Heart right ventricle (tissue), 16 donors: ENCODE measurements at regions of chr9 and their contacts with region 1.

Region 1: DNA sequence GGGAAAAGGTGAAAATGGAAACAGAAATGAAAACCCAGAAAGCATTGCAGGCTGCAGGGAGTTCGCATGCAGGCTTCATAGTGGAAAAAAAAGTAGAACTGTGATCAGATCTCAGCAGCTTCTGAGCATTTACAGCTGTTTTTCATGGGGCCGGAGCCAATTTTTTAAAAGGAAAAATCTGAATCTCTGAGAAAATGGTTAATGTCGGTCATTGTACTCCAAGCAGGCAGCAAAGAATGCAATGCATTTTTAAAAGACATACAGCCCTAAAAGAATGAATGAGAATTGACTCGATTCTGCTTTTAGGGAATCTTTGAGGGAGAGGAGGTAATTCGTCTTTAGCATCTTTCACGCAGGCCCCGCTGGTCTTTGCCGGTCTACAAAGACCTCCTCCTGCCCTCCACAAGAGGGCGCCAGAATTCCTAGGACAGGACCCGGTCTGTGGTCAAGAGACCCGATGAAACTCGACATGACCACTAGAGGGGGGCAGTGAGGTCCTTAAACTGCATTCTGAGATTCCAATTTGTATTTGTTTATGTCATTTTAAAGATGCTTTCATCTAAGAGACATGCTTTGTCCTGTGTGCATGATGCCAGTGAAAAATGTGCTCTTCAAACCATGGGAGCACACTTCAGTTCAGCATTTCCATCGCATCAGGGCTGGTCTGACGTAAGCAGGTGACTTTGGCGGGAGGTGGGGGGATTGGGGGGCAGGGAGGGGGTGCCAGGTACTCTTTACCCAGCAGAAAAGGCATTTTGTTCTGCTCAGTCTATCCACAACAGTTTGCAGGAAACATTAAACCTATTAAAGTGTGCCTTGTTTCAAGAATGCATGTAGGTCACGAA is 43.7 kb upstream of the TMEM252 start:
- DNase-seq: peak; percentile 68 to 89
- ATAC-seq: peak; percentile 94 to 98 (median 97)
- H3K4me3 ChIP-seq: peak overlapping the region in 1 of 10 donors; percentile 10
- H3K27ac ChIP-seq: peak overlapping the region in 1 of 10 donors; percentile 39
- H3K4me1 ChIP-seq: no peaks in the 10 kb centered on the region
- H3K27me3 ChIP-seq: no peaks in the 10 kb centered on the region
- CTCF ChIP-seq: peak; percentile 95 to 100 (median 99)

Region 2: DNA sequence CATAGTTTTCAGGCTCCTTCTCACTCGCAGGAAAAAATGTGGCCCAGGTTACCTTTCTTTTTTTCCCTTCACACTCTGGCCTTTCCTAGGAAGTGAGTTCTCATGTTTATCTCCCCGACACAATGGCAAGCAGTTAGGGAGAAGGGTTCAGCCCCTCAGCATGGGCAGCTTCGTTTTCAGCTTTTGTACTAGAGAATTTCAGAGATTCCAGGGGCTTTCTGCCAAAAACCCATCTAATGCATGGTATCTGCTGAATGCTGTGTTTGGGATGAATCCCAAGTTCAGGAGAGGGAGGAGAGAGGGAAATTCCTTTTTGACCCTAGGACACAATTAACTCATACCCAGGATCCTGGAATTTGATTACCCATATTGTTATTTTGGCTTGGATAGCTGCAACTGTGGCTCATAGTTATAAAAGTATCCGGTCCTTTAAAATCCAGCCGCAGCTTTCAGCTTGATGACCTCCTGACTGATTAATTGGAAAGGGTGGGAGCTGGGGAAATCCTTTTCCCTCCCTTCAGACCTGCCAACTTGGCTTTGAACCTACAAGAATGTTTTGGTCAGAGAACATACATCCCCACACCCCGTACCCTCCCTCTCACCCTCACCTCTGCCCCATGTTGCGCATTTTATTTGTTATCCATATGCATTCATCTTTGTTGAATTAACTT is 122.2 kb before region 1 on chr9:
- intact Hi-C with region 1: no loop called
- DNase-seq: peak in 1 of 2 donors; percentile 26
- ATAC-seq: peak; percentile 54 to 85 (median 76)
- H3K4me3 ChIP-seq: no peak overlapping the region
- H3K27ac ChIP-seq: peak overlapping the region in 8 of 10 donors; percentile 0 to 72 (median 42)
- H3K4me1 ChIP-seq: peaks cover 0 to 68% (median 32%) of the 10 kb centered on the region in 9 donors
- H3K27me3 ChIP-seq: no peaks in the 10 kb centered on the region
- CTCF ChIP-seq: no peak

Region 3: DNA sequence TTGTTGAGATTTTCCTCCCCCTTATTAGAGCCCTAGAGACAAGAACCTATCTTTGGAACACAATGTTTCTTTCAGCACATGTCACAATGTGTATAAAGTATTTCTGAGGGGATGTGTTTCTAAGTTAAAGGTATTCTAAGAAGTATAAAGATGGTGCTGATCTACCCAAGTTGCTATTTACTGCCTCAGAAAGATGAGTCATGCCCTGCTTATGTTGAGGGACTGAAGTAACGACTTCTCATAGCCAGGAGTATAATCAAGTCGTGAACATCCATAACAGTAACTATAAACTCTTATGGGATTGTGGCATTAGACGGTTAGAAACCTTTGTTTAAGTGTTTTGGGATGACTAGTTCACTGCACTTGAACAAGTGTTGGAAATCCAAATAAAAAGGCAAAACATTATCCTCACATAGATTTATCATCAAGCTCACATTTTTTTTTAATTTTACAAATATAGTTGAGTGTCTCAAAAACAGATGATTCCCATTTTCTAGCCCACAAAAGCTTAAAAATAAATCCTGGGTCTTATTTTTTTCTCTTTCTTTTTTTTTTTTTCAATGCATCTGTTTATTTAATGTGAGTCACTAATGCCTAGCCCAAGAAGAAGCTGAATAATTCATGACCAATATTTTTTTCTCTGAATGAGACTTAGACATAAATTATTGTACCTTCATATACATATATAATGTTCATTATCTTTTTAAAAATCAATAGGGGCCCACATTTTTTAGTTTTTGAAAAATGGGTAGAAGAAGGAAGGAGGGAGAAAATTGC is 31.5 kb before region 1 on chr9:
- intact Hi-C with region 1: no loop called
- DNase-seq: no peak
- ATAC-seq: peak in 3 of 8 donors; percentile 28 to 53 (median 39)
- H3K4me3 ChIP-seq: no peak overlapping the region
- H3K27ac ChIP-seq: no peak overlapping the region
- H3K4me1 ChIP-seq: peaks cover 0 to 16% (median 0%) of the 10 kb centered on the region in 9 donors
- H3K27me3 ChIP-seq: no peaks in the 10 kb centered on the region
- CTCF ChIP-seq: no peak

Region 4: DNA sequence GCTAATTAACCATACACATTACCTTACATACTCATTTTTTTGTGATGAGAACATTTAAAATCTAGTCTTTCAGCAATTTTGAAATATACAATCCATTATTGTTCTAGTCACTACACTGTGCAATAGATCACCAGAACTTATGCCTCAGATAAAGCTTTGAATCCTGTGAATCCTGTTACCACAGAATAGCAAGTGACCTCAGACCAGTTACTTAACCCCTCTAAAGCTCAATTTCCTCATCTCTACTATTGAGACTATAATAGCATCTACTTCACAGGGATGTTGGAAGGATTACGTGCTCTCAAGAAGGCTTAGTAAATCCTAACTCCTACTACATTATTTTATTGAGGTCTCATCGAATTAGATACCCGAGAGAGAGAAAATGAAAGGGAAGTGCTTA is 60.4 kb after region 1 on chr9:
- intact Hi-C with region 1: no loop called
- DNase-seq: no peak
- ATAC-seq: no peak
- H3K4me3 ChIP-seq: no peak overlapping the region
- H3K27ac ChIP-seq: no peak overlapping the region
- H3K4me1 ChIP-seq: peaks cover 0 to 4% (median 0%) of the 10 kb centered on the region in 9 donors
- H3K27me3 ChIP-seq: no peaks in the 10 kb centered on the region
- CTCF ChIP-seq: no peak

Region 5: DNA sequence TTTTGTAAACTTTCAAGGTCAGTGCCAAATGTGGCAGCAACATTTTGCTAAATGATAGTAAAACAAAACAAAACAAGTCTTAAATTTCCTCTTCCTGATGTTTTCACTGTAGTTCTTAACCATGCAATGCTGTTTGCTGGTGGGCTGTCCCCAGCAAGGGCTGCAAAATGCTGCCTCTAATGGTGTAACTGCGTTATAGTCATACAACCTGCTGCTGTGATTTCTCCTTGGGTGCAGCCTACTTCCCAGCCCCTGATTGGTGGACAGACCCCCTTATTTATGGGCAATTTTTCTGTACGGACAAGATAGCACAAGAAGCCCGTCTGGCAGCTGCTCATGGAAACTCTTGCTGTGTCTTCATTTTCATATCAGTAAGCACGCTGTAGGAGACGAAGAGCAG is 94.0 kb after region 1 on chr9:
- intact Hi-C with region 1: loop called in 2 of 10 experiments (anchors 10 kb)
- DNase-seq: peak in 1 of 2 donors; percentile 5
- ATAC-seq: peak in 6 of 8 donors; percentile 61 to 87 (median 75)
- H3K4me3 ChIP-seq: no peak overlapping the region
- H3K27ac ChIP-seq: no peak overlapping the region
- H3K4me1 ChIP-seq: peaks cover 0 to 21% (median 0%) of the 10 kb centered on the region in 9 donors
- H3K27me3 ChIP-seq: peaks cover 0 to 17% (median 4%) of the 10 kb centered on the region in 7 donors
- CTCF ChIP-seq: peak; percentile 20 to 59 (median 35)

Region 6: GRCh38 chr9:68698943-68699509 is 114.6 kb after region 1 on chr9:
- intact Hi-C with region 1: loop called in 7 of 10 experiments (anchors 2 to 10 kb)
- DNase-seq: no peak
- ATAC-seq: no peak
- H3K4me3 ChIP-seq: no peak overlapping the region
- H3K27ac ChIP-seq: no peak overlapping the region
- H3K4me1 ChIP-seq: peaks cover 0 to 2% (median 0%) of the 10 kb centered on the region in 9 donors
- H3K27me3 ChIP-seq: peaks cover 0 to 9% (median 0%) of the 10 kb centered on the region in 7 donors
- CTCF ChIP-seq: no peak

Region 7: DNA sequence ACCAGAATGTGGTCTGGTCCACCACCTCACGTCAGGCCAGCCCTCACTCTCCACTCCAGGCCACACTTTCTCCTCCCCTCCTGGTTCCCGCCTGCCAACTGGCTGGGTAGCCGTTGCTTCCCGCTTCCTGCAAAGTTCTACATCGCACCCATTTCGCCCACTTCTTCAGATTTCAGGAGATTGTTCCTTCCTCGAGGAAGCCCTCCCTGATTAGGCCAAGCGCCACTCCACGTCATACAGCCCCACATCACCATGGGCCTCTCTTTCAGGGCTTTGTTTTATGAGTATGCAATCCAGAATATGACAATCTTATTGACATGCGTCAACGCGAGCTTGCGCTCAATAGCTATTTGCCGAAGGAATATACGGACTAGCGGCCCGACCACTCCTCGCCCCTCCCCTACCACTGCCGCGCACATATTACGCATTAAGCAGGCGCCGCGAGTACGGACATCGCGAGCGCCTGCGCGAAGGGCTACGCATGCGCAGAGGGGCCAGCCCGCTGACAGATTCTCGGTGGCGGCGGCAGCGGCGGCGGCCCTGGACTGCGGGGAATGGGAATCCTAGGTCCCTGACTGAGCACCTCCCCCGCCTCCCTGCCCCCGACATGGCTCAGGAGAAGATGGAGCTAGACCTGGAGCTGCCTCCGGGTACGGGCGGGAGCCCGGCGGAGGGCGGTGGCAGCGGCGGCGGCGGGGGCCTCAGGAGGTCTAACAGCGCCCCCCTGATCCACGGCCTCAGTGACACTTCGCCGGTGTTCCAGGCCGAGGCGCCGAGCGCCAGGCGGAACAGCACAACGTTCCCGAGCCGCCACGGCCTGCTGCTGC is 195.4 kb after region 1 on chr9:
- intact Hi-C with region 1: loop called in 4 of 10 experiments (anchors 5 to 10 kb)
- DNase-seq: peak; percentile 96
- ATAC-seq: peak; percentile 92 to 98 (median 96)
- H3K4me3 ChIP-seq: peak overlapping the region; percentile 47 to 79 (median 73)
- H3K27ac ChIP-seq: peak overlapping the region; percentile 84 to 97 (median 92)
- H3K4me1 ChIP-seq: peaks cover 9 to 80% (median 58%) of the 10 kb centered on the region in 9 donors
- H3K27me3 ChIP-seq: no peaks in the 10 kb centered on the region
- CTCF ChIP-seq: peak in 7 of 9 donors; percentile 16 to 67 (median 56)

Region 8: GRCh38 chr9:68949271-68950000 is 365.0 kb after region 1 on chr9:
- intact Hi-C with region 1: loop called in 2 of 10 experiments (anchors 10 kb)
- DNase-seq: peak in 1 of 2 donors; percentile 23
- ATAC-seq: peak in 4 of 8 donors; percentile 30 to 41 (median 38)
- H3K4me3 ChIP-seq: no peak overlapping the region
- H3K27ac ChIP-seq: peak overlapping the region in 2 of 10 donors; percentile 12 to 36
- H3K4me1 ChIP-seq: peaks cover 0 to 15% (median 0%) of the 10 kb centered on the region in 9 donors
- H3K27me3 ChIP-seq: no peaks in the 10 kb centered on the region
- CTCF ChIP-seq: peak in 6 of 9 donors; percentile 11 to 39 (median 19)

Region 9: GRCh38 chr9:69027355-69028096 is 443.1 kb after region 1 on chr9:
- intact Hi-C with region 1: loop called in 6 of 10 experiments (anchors 1 to 5 kb)
- DNase-seq: peak in 1 of 2 donors; percentile 31
- ATAC-seq: peak; percentile 47 to 78 (median 70)
- H3K4me3 ChIP-seq: no peak overlapping the region
- H3K27ac ChIP-seq: no peak overlapping the region
- H3K4me1 ChIP-seq: peaks cover 0 to 23% (median 0%) of the 10 kb centered on the region in 9 donors
- H3K27me3 ChIP-seq: peaks cover 0 to 3% (median 0%) of the 10 kb centered on the region in 7 donors
- CTCF ChIP-seq: peak; percentile 64 to 87 (median 80)